Aorta (tissue), 5 donors: ENCODE measurements at regions of chr6 and their contacts with region 1.

Region 1: GRCh38 chr6:33417903-33418689 is at the start of gene CUTA:
- DNase-seq: peak; percentile 100
- ATAC-seq: peak; percentile 96
- H3K4me3 ChIP-seq: peak within 1 kb of the TSS; percentile 40 to 68
- H3K27ac ChIP-seq: peak within 1 kb of the TSS; percentile 25 to 93
- H3K4me1 ChIP-seq: no peaks in the 10 kb centered on the region
- H3K27me3 ChIP-seq: no peaks in the 10 kb centered on the region
- total RNA-seq, gene CUTA: 89.9 to 111 TPM

Region 2: GRCh38 chr6:31652925-31653718 is 1765.0 kb before region 1 on chr6:
- intact Hi-C with region 1: loop called in 1 of 2 experiments (anchors 10 kb)
- DNase-seq: peak; percentile 92 to 93
- ATAC-seq: peak; percentile 90
- H3K4me3 ChIP-seq: peak overlapping the region; percentile 32 to 64
- H3K27ac ChIP-seq: peak overlapping the region; percentile 52 to 87
- H3K4me1 ChIP-seq: no peaks in the 10 kb centered on the region
- H3K27me3 ChIP-seq: no peaks in the 10 kb centered on the region

Region 3: DNA sequence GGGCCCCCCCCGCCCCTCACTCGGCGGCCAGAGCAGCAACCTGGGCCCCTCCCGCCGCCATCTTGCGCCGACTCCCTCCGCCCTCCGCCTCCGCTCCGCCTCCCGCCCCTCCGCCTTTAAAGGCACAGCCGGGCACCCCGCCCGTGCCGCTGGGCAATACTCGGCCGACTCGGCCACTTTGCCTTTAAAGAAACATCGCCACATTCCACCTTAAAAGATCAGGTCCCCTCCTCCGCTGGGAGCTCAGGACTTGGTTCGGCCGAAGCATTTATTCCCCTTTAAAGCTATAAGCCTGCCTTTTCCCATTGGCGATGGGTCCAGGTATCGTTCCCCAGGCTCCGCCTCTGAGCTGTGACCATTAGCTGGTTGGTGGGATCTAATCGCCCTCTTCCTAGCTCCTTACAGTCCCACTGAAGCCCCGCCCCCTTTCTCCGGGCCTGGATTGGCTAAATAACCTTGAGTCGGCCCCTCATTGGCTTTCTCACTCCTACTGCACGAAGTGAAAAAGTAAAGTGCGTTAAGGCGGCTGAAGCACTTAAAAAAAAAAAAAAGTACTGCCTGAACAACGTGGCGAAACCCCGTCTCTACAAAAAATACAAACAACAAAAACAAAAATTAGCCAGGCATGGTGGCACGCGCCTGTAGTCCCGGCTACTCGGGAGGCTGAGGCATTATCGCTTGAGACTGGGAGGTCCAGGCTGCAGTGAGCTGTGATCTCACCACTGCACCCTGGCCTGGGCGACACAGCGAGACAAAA is 100.2 kb before region 1 on chr6 and contains the start of gene ZBTB22:
- intact Hi-C with region 1: loop called in 1 of 2 experiments (anchors 2 kb)
- DNase-seq: peak; percentile 99 to 100
- ATAC-seq: peak; percentile 87
- H3K4me3 ChIP-seq: peak within 1 kb of the TSS in 1 of 2 donors; percentile 45
- H3K27ac ChIP-seq: peak within 1 kb of the TSS in 1 of 2 donors; percentile 67
- H3K4me1 ChIP-seq: peaks cover 0 to 4% of the 10 kb centered on the region in 2 donors
- H3K27me3 ChIP-seq: no peaks in the 10 kb centered on the region
- total RNA-seq, gene ZBTB22: 21.3 TPM

Region 4: DNA sequence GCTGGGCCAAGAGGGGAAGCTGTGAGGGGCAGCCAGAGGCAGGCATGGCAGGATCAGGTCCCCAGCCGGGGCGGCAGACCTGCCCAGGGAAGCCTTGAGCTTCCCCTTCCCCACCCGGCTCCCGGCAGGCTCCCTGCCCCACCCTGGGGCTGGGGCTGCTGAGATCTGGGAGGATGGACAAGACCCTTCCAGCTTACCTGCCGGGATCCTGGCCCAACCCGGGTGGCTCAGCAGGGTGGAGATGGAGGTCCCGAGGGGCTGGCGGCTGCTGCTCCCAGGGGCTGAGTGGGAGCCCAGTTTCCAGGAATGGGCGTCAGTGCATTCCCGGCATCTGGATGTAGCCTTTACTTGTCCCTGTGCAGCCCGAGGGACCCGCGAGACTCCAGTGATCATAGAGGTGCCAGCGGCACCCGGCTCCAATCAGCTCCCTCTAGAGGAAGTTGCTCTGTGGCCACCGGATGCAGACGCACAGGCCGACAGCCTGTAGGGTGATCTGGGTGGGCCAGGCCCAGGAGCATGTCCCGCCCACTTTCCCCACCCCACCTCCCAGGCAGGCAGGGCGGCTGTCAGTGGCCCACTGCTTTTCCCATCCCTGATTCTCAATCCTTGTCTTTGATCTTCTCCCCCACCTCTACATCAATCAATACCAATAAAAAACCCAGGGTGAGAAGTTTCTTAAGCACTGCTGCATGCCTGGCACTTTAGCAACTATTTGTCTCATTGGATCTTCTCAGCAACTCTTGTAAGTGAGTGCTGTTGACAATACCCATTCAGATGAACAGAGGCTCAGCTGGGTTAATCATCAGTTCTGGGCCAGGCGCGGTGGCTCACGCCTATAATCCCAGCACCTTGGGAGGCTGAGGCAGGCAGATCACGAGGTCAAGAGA is 162.0 kb after region 1 on chr6 and contains the start of gene BAK1:
- intact Hi-C with region 1: loop called in 1 of 2 experiments (anchors 10 kb)
- DNase-seq: peak; percentile 95 to 96
- ATAC-seq: peak; percentile 93
- H3K4me3 ChIP-seq: peak within 1 kb of the TSS; percentile 32 to 68
- H3K27ac ChIP-seq: peak within 1 kb of the TSS; percentile 43 to 47
- H3K4me1 ChIP-seq: no peaks in the 10 kb centered on the region
- H3K27me3 ChIP-seq: no peaks in the 10 kb centered on the region
- total RNA-seq, gene BAK1: 12.4 to 15.0 TPM